WTC11 (cell line): ENCODE measurements at regions of chr15 and their contacts with region 1.

Region 1: GRCh38 chr15:88897456-88898194 is 2.3 kb upstream of the HAPLN3 start:
- DNase-seq: peak; percentile 53
- ATAC-seq: 0 out of 2 replicates have a peak, but pooled peaks have one; percentile 1
- H3K4me3 Mint-ChIP-seq: no peak overlapping the region; the same call in 1 of the 2 replicates
- H3K27ac Mint-ChIP-seq: peak overlapping the region; percentile 93
- H3K4me1 Mint-ChIP-seq: peaks cover 53% of the 10 kb centered on the region
- H3K27me3 Mint-ChIP-seq: 0 out of 2 replicates have a peak, but pooled peaks cover 2% of the 10 kb centered on the region
- CTCF ChIP-seq: no peak

Region 2: DNA sequence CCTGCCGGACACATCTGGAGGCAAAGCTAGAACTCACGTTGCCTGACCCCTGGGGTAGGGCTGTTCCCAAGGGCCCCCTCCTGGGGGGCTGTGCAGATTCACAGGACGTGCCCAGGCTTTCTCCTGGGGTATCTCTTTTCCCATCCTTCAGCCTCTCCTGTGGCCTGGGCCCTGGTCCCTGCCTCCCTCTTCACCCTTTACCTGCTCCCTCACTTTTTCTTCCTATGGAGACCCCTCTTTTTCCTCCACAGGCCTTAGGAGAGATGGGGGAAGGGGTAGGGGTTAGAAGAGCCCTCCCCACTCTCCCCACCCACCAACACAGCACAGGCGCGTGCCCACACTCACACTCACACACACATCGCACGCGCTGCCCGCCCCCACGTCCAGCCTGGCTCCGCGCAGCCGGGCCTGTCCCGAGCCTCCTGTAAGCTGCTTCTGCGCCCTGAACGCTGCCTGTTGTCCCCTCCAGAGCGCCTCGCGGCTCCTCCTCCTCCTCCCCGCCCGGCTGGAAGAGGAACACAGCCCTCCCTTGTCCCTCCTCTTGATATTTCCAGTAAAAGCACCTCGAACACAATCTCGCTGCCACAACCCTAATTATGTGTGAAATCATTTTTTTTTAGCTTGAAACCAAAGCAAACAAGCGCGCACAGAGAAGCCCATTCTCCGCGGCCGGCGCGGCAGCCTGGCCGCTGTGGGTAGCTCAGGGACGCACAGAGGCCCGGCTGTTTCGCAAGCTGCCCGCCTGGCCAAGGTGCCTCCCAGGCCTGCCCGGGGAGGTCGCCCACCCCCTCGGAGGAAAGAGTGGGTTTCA is 128.3 kb before region 1 on chr15:
- CTCF ChIA-PET with region 1: no interaction called
- POLR2A ChIA-PET with region 1: no interaction called
- DNase-seq: peak; percentile 58
- ATAC-seq: peak; percentile 96
- H3K4me3 Mint-ChIP-seq: peak overlapping the region; percentile 79
- H3K27ac Mint-ChIP-seq: no peak overlapping the region
- H3K4me1 Mint-ChIP-seq: peaks cover 8% of the 10 kb centered on the region; the same call in 1 of the 2 replicates
- H3K27me3 Mint-ChIP-seq: peaks cover 42% of the 10 kb centered on the region
- CTCF ChIP-seq: no peak

Region 3: DNA sequence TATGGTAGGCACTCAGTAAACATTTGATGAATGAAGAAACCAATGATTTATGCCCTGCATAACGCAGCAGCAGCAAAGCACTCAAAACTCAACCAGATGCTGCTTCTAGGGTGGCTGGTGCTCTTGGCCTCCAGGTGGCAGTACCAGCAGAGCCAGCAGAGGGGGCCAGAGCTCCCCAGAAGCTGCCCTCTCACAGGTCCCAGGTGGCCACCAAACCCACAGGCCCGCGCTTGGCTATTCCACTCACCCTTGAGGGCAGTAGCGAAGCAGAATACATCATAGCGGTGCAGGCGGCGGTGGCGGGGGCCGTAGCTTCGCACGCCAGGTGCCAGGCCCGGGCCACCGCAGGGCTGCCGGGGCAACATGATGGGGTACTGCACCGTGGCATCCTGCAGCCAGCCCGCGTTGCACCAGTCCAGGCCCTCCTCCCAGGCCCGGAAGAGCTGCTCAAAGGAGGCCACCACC is 18.9 kb before region 1 on chr15:
- CTCF ChIA-PET with region 1: interaction called, 13 read pairs
- POLR2A ChIA-PET with region 1: interaction called, 6 read pairs
- DNase-seq: peak; percentile 86
- ATAC-seq: peak; percentile 92
- H3K4me3 Mint-ChIP-seq: no peak overlapping the region
- H3K27ac Mint-ChIP-seq: peak overlapping the region; percentile 85; the same call in 1 of the 2 replicates
- H3K4me1 Mint-ChIP-seq: peaks cover 14% of the 10 kb centered on the region
- H3K27me3 Mint-ChIP-seq: no peaks in the 10 kb centered on the region
- CTCF ChIP-seq: peak; percentile 60